ENCODE measurements at regions of chr9 and their contacts with region 1.

Region 1: GRCh38 chr9:78261403-78262001 is 25.6 kb downstream of the CEP78 start:
- DNase-seq: no peak
- H3K4me3 ChIP-seq: no peak overlapping the region
- H3K27ac ChIP-seq: no peak overlapping the region
- H3K4me1 ChIP-seq: no peaks in the 10 kb centered on the region
- H3K27me3 ChIP-seq: no peaks in the 10 kb centered on the region
- CTCF ChIP-seq: peak; percentile 52 to 68 (median 66)
- EP300 ChIP-seq: no peak
- POLR2A ChIP-seq: no peak

Region 2: DNA sequence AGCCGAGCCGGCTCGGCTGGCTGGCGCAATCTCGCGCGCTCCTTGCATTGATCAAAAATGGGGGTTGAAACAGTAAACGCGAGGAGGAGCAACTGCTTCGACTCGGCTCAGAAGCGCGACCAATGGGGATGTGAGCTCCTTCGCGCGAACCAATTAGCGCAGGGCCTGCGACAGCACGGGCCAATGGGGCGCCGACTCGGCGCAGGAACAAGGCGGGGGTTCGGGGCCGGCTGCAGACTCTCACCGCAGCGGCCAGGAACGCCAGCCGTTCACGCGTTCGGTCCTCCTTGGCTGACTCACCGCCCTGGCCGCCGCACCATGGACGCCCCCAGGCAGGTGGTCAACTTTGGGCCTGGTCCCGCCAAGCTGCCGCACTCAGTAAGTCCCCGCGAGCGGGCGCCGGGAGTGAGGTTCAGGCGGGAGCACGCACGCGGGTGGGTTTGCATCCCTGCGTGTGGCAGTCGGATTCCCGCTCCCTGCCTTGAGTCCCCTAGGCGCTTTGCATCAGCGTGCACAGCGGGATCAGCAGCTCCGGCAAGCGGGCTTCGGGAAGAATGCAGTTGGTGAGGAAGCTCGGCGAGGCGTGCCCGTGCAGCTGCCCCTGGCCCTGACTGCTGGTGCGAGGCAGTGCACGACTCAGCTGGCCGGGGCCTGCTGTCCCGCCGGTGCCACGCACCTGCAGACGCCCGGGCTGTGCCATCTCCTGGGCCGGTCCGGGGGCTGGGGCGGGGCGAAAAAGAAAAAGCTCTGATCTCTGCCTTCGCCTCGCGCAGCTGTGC is 35.6 kb after region 1 on chr9 and contains the start of gene PSAT1:
- intact Hi-C with region 1: loop called (anchors 5 kb)
- DNase-seq: no peak
- H3K4me3 ChIP-seq: peak within 1 kb of the TSS; percentile 65 to 82 (median 69)
- H3K27ac ChIP-seq: peak within 1 kb of the TSS; percentile 71 to 86 (median 75)
- H3K4me1 ChIP-seq: peaks cover 30 to 36% (median 31%) of the 10 kb centered on the region in 4 donors
- H3K27me3 ChIP-seq: peaks cover 0 to 7% (median 2%) of the 10 kb centered on the region in 4 donors
- CTCF ChIP-seq: no peak
- EP300 ChIP-seq: no peak
- POLR2A ChIP-seq: no peak
- total RNA-seq, gene PSAT1: 1.7 to 4.6 (median 2.5) TPM

Region 3: GRCh38 chr9:78369639-78370219 is 108.2 kb after region 1 on chr9:
- intact Hi-C with region 1: loop called (anchors 2 kb)
- DNase-seq: no peak
- H3K4me3 ChIP-seq: no peak overlapping the region
- H3K27ac ChIP-seq: no peak overlapping the region
- H3K4me1 ChIP-seq: no peaks in the 10 kb centered on the region
- H3K27me3 ChIP-seq: peaks cover 0 to 24% (median 0%) of the 10 kb centered on the region in 4 donors
- CTCF ChIP-seq: peak; percentile 60 to 78 (median 69)
- EP300 ChIP-seq: no peak
- POLR2A ChIP-seq: no peak

Region 4: GRCh38 chr9:78406933-78407332 is 145.4 kb after region 1 on chr9:
- intact Hi-C with region 1: no loop called
- DNase-seq: no peak
- H3K4me3 ChIP-seq: no peak overlapping the region
- H3K27ac ChIP-seq: no peak overlapping the region
- H3K4me1 ChIP-seq: no peaks in the 10 kb centered on the region
- H3K27me3 ChIP-seq: peaks cover 0 to 14% (median 0%) of the 10 kb centered on the region in 4 donors
- CTCF ChIP-seq: no peak
- EP300 ChIP-seq: no peak
- POLR2A ChIP-seq: no peak